ENCODE measurements at regions of chr13 and their contacts with region 1.

Region 1: GRCh38 chr13:46313432-46314257 is 73.4 kb downstream of the RUBCNL start:
- DNase-seq: no peak
- ATAC-seq: peak; percentile 57
- H3K4me3 Mint-ChIP-seq: peak overlapping the region; percentile 57
- H3K27ac Mint-ChIP-seq: peak overlapping the region; percentile 87
- H3K4me1 Mint-ChIP-seq: peaks cover 23% of the 10 kb centered on the region
- H3K27me3 Mint-ChIP-seq: no peaks in the 10 kb centered on the region

Region 2: DNA sequence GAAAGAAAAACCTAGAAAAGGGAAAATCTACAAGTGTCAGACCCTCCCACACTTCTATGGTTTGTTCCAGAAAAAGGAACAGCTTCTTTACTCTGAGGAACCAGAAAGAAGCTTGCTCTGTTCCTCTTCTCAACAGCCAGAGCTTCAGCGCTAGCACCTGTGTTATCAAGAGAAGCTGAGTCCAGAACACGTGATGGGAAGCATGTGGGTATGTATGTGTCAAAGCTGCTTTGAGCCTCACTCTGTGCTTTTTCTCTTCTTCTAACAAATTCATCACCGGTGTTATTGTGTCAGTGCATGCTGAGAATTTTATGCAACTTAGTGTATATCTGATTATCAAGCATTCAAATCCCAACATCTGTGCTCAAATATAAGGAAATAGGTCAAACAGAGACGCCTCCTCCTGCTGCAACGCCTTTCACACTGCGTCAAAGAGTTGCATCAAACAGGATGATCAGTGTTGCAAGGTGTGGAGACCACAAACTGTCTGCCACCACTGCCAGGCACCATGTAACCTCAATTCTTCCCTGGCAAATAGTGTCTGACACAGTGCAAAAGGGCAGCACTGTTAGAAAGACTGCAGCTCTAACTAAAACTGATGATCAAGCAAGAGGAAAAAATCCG is 18.0 kb before region 1 on chr13:
- CTCF ChIA-PET with region 1: interaction called, 160 read pairs
- POLR2A ChIA-PET with region 1: interaction called, 3 read pairs
- DNase-seq: peak; percentile 83
- ATAC-seq: peak; percentile 92
- H3K4me3 Mint-ChIP-seq: peak overlapping the region; percentile 68
- H3K27ac Mint-ChIP-seq: peak overlapping the region; percentile 98
- H3K4me1 Mint-ChIP-seq: peaks cover 46% of the 10 kb centered on the region
- H3K27me3 Mint-ChIP-seq: no peaks in the 10 kb centered on the region

Measured in activated CD8-positive, alpha-beta T cell treated with anti-CD3 and anti-CD28 coated beads, Interleukin-2, amount 10 ng/mL, durations not matched to agents 7 days and 5 days (primary cell).